ENCODE measurements at regions of chr1 and their contacts with region 1.

Region 1: DNA sequence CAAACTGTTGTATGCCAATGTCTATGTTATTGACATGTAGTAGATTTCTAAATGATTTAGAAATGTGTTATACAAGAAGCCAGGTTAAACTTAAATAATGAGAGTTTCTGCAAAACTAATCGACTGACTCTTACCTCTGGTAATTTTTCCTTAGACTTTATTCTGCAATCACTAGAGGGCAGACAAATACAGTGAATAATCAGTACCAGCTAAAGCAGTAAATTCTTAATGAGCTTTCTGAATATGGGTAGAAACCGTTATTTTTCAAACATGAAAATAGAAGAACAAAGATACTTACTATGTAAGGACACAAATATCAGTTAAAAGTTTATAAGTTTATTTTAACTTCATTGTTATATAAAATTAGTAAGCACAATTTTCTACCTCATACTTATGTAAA is 97.9 kb upstream of the RGS1 start:
- DNase-seq: no peak
- ATAC-seq: peak; percentile 69 to 75
- H3K4me3 ChIP-seq: no peak overlapping the region
- H3K27ac ChIP-seq: no peak overlapping the region
- H3K4me1 ChIP-seq: no peaks in the 10 kb centered on the region
- H3K27me3 ChIP-seq: no peaks in the 10 kb centered on the region

Region 2: DNA sequence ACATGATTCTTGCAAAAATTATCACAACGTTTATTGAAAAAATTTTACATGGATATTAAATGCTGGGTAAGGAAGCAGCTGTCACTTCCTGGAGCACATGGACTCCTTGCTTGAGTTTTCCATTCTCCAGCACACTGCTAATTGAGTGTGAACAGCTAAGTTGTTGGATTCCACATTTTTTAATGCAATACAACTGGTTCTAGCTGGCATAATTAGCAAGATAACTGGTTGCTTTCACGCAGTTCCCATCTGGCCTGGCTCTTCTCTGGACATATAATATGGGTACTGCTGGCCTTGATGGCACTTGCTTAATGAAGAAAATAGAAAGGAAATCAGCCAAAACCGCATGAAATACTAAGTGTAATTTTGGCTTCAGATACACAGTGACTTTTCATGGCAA is 134.3 kb before region 1 on chr1:
- intact Hi-C with region 1: no loop called
- DNase-seq: no peak
- ATAC-seq: no peak
- H3K4me3 ChIP-seq: no peak overlapping the region
- H3K27ac ChIP-seq: no peak overlapping the region
- H3K4me1 ChIP-seq: no peaks in the 10 kb centered on the region
- H3K27me3 ChIP-seq: no peaks in the 10 kb centered on the region

Region 3: GRCh38 chr1:192378276-192378675 is 99.4 kb before region 1 on chr1:
- intact Hi-C with region 1: no loop called
- DNase-seq: no peak
- ATAC-seq: no peak
- H3K4me3 ChIP-seq: no peak overlapping the region
- H3K27ac ChIP-seq: no peak overlapping the region
- H3K4me1 ChIP-seq: no peaks in the 10 kb centered on the region
- H3K27me3 ChIP-seq: no peaks in the 10 kb centered on the region

Region 4: DNA sequence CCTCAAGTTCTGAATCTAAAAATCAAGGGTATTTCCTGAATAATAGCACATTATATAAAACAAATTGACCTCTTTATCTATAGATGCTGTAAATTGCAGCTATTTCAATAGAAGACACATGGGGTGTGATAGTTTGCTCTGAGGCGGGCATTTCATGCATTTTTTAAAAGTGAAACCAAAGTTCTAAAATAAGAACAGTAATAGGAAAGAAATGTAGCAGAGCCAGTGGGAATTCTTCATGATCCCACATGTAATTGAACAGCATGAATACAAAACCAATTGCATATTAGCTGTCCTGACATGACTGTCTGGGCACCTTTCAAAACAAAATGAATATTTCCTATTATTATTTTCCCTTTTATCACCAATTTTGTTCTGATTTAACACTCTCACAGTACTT is 75.8 kb before region 1 on chr1:
- intact Hi-C with region 1: no loop called
- DNase-seq: no peak
- ATAC-seq: no peak
- H3K4me3 ChIP-seq: no peak overlapping the region
- H3K27ac ChIP-seq: no peak overlapping the region
- H3K4me1 ChIP-seq: no peaks in the 10 kb centered on the region
- H3K27me3 ChIP-seq: no peaks in the 10 kb centered on the region

Region 5: GRCh38 chr1:192609110-192610079 is 131.8 kb after region 1 on chr1:
- intact Hi-C with region 1: loop called in 3 of 4 experiments (anchors 5 to 10 kb)
- DNase-seq: peak; percentile 39 to 64 (median 55)
- ATAC-seq: peak; percentile 40 to 48
- H3K4me3 ChIP-seq: no peak overlapping the region
- H3K27ac ChIP-seq: no peak overlapping the region
- H3K4me1 ChIP-seq: no peaks in the 10 kb centered on the region
- H3K27me3 ChIP-seq: no peaks in the 10 kb centered on the region

Region 6: GRCh38 chr1:192808518-192809306 is 331.1 kb after region 1 on chr1 and contains the start of gene RGS2:
- intact Hi-C with region 1: loop called in 1 of 4 experiments (anchors 10 kb)
- DNase-seq: peak; percentile 93 to 97 (median 97)
- ATAC-seq: peak; percentile 99
- H3K4me3 ChIP-seq: peak within 1 kb of the TSS; percentile 87
- H3K27ac ChIP-seq: peak within 1 kb of the TSS; percentile 93
- H3K4me1 ChIP-seq: no peaks in the 10 kb centered on the region
- H3K27me3 ChIP-seq: no peaks in the 10 kb centered on the region
- total RNA-seq, gene RGS2: 24.0 to 106 (median 38.0) TPM

Region 7: DNA sequence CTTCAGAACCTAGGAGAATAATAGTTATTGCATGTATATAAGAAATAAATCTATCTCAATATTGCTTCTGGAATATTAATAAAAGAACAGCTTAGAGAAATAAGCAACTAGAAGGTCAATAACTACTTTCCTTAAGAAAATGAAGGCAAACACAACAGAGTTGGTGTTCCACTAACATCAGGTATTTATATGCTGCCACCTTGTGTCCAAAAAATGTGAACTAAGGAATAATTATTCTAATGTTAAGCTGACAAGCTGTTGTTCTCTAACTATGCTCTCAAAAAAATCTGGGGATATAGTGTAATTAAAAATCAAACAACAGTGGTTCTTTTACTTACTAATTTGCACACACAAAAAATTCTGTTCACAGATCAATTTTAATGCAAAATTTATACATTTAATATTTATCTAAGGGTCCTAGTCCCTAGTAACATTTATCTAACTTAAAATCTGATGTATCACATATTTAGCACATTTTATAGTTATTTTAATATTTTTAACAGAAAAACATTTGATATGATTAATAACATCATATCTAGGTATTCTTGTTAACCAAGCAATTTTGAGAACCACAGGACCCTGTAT is 541.9 kb after region 1 on chr1:
- intact Hi-C with region 1: loop called (anchors 5 to 10 kb)
- DNase-seq: no peak
- ATAC-seq: peak; percentile 23 to 64
- H3K4me3 ChIP-seq: no peak overlapping the region
- H3K27ac ChIP-seq: no peak overlapping the region
- H3K4me1 ChIP-seq: no peaks in the 10 kb centered on the region
- H3K27me3 ChIP-seq: no peaks in the 10 kb centered on the region

Region 8: DNA sequence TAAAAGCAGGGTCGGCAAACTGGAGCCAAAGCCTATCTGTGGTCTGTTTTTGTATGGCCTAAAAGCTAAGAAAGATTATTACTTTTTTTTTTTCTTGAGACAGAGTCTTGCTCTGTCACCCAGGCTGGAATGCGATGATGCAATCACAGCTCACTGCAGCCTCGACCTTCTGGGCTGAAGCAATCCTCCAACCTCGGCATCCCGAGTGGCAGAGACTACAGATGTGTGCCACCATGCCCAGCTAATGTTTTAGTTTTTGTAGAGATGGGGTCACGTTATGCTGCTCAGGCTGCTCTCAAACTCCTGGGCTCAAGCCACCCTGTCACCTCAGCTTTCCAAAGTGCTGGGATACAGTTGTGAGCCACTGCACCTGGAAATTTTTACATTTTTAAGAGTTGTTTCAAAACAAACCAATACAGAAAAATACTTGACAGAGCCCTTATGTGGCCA is 634.0 kb after region 1 on chr1:
- intact Hi-C with region 1: loop called in 1 of 4 experiments (anchors 10 kb)
- DNase-seq: peak; percentile 70 to 84 (median 79)
- ATAC-seq: peak; percentile 80 to 86
- H3K4me3 ChIP-seq: no peak overlapping the region
- H3K27ac ChIP-seq: peak overlapping the region; percentile 23
- H3K4me1 ChIP-seq: no peaks in the 10 kb centered on the region
- H3K27me3 ChIP-seq: no peaks in the 10 kb centered on the region

Region 9: GRCh38 chr1:193121616-193122593 is 644.3 kb after region 1 on chr1 and contains the start of gene CDC73:
- intact Hi-C with region 1: loop called in 2 of 4 experiments (anchors 10 kb)
- DNase-seq: peak; percentile 98 to 100 (median 99)
- ATAC-seq: peak; percentile 99
- H3K4me3 ChIP-seq: peak within 1 kb of the TSS; percentile 69
- H3K27ac ChIP-seq: peak within 1 kb of the TSS; percentile 88
- H3K4me1 ChIP-seq: peaks cover 2% of the 10 kb centered on the region
- H3K27me3 ChIP-seq: no peaks in the 10 kb centered on the region
- total RNA-seq, gene CDC73: 53.5 to 60.9 (median 55.4) TPM

Measured in right cardiac atrium (tissue), 5 donors.